Transverse colon (tissue), 4 donors: ENCODE measurements at regions of chr10 and their contacts with region 1.

Region 1: GRCh38 chr10:21732067-21732772 is 198.2 kb downstream of the MLLT10 start:
- DNase-seq: peak; percentile 26
- H3K4me3 ChIP-seq: no peak overlapping the region
- H3K27ac ChIP-seq: no peak overlapping the region
- H3K4me1 ChIP-seq: peaks cover 0 to 11% (median 5%) of the 10 kb centered on the region in 4 donors
- H3K27me3 ChIP-seq: no peaks in the 10 kb centered on the region
- CTCF ChIP-seq: peak; percentile 46 to 68 (median 56)
- EP300 ChIP-seq: no peak
- POLR2A ChIP-seq: no peak

Region 2: GRCh38 chr10:21278491-21279239 is 453.6 kb before region 1 on chr10:
- in situ Hi-C with region 1: loop called in 2 of 4 experiments (anchors 10 to 25 kb)
- intact Hi-C with region 1: no loop called
- DNase-seq: peak; percentile 88
- H3K4me3 ChIP-seq: no peak overlapping the region
- H3K27ac ChIP-seq: no peak overlapping the region
- H3K4me1 ChIP-seq: no peaks in the 10 kb centered on the region
- H3K27me3 ChIP-seq: no peaks in the 10 kb centered on the region
- CTCF ChIP-seq: peak; percentile 57 to 73 (median 65)
- EP300 ChIP-seq: no peak
- POLR2A ChIP-seq: no peak

Region 3: GRCh38 chr10:21285742-21286331 is 446.4 kb before region 1 on chr10:
- in situ Hi-C with region 1: loop called in 2 of 4 experiments (anchors 10 to 25 kb)
- intact Hi-C with region 1: no loop called
- DNase-seq: no peak
- H3K4me3 ChIP-seq: no peak overlapping the region
- H3K27ac ChIP-seq: no peak overlapping the region
- H3K4me1 ChIP-seq: no peaks in the 10 kb centered on the region
- H3K27me3 ChIP-seq: no peaks in the 10 kb centered on the region
- CTCF ChIP-seq: no peak
- EP300 ChIP-seq: no peak
- POLR2A ChIP-seq: no peak